Cardiac septum (tissue), 1 donor: ENCODE measurements at regions of chr3 and their contacts with region 1.

Region 1: GRCh38 chr3:192825657-192826200 is 91.9 kb downstream of the MB21D2 start:
- DNase-seq: no peak

Region 2: GRCh38 chr3:193240850-193241706 is 415.3 kb after region 1 on chr3 and contains the start of gene PLAAT1:
- intact Hi-C with region 1: loop called (anchors 10 kb)
- DNase-seq: no peak
- total RNA-seq, gene PLAAT1: 9.2 TPM